Cardiac septum (tissue), 1 donor: ENCODE measurements at regions of chr4 and their contacts with region 1.

Region 1: GRCh38 chr4:173698557-173699262 is 168.7 kb upstream of the HAND2 start:
- DNase-seq: peak; percentile 88

Region 2: GRCh38 chr4:173538148-173538908 is 160.4 kb before region 1 on chr4:
- intact Hi-C with region 1: loop called (anchors 2 kb)
- DNase-seq: no peak

Region 3: DNA sequence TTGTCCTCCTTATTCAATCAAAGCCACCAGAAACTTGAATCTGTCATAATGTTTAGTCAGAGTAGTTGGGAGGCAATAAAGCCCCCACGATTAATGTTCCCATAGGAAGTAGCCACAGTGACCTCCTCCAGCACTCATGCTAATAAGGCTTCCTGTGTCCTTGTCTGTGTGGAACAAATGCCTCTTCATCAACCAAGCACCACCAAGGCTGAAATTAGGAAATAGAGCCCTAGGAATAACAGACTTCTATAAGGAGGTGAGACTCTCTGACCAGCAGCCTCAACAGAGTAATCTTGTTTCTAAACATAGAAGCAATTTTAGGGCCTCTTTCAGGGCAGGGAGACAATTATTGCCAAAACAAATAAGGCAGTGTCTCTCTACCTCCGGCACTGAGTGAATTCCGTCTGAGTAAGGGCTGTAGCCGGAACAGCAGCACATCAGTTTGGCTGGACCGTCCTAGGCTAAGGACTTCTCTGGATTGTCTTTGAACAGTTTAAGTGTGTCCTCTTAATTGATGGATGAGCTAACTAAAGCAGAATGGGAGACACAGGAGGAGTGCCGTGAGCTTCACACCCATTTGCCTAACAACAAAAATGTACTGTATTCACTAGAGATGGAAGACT is 160.5 kb after region 1 on chr4:
- intact Hi-C with region 1: no loop called
- DNase-seq: no peak

Region 4: DNA sequence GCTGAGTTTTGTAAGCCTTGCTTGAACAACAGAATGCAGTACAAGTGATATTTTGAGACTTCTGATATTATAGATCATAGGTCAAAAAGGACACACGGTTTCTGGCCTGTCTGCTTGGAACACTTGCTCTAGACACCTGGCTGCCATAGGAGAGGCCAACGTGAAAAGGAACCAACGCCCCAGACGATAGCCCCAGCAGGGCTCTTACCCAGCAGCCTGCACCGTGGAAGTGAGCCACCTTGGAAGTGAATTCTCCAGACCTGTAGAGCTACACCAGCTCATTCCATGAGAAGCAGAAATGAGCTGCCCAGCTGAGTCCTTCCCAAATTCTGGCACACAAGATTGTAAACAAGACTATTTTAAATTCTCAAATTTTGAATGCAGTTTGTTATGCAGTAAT is 261.7 kb after region 1 on chr4:
- intact Hi-C with region 1: no loop called
- DNase-seq: no peak

Region 5: DNA sequence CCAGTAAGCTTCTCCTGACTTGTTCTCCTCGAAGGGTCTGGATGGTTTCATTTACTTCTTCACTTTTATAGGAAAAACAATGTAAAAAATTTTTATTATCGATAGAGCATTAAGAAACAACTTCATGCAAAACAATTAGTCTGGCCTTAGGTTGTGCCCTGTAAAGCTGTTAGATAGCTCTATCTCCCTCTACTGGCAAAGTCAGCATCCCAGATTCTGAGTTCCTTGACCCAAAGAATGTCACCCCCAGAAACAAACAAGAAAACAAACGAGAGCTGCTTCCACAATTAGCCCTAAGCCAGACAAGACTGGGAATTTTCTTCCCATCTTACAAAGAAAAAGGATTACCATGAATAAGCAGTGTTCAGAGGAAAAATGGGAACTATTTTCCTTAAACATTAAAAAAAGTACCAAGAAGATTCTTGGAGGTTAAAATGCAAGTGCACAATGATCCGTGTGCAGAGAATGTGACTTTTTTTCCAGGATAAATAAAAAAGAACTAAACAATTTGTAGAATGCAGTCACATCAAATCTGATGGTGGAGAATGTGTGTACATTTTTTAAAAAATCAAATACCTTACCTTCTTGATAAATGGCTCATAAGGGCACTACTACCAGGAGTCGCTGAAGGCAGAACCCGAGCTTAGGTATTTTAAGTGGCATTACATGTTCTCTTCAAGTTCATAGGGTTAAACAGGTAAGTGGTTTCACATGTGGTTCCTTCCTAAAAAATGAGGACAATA is 291.6 kb after region 1 on chr4:
- intact Hi-C with region 1: loop called (anchors 5 kb)
- DNase-seq: no peak